Sigmoid colon (tissue), 7 donors: ENCODE measurements at regions of chr2 and their contacts with region 1.

Region 1: DNA sequence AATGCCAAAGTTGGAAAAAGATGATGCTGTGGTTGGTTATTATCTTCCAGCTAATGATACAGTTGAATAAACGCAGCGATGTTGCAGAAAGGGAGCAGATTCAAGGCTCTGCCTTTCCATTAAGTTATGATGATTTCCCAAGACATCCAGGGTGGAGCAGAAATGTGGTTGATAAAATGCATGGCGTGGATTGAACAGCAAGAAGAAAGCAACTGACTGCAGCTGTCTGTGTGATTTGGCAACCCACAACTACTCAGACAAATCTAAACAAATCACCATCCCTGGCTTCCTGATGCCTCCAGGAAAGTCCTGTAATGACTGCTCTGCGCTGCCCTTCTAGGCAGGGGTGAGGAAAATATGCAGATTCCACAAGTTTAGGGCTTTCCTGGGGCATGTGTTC is 166.3 kb downstream of the NRP2 start:
- DNase-seq: no peak
- H3K4me3 ChIP-seq: no peak overlapping the region
- H3K27ac ChIP-seq: no peak overlapping the region
- H3K4me1 ChIP-seq: peaks cover 0 to 19% (median 15%) of the 10 kb centered on the region in 4 donors
- H3K27me3 ChIP-seq: no peaks in the 10 kb centered on the region
- CTCF ChIP-seq: no peak
- EP300 ChIP-seq: no peak
- POLR2A ChIP-seq: no peak

Region 2: DNA sequence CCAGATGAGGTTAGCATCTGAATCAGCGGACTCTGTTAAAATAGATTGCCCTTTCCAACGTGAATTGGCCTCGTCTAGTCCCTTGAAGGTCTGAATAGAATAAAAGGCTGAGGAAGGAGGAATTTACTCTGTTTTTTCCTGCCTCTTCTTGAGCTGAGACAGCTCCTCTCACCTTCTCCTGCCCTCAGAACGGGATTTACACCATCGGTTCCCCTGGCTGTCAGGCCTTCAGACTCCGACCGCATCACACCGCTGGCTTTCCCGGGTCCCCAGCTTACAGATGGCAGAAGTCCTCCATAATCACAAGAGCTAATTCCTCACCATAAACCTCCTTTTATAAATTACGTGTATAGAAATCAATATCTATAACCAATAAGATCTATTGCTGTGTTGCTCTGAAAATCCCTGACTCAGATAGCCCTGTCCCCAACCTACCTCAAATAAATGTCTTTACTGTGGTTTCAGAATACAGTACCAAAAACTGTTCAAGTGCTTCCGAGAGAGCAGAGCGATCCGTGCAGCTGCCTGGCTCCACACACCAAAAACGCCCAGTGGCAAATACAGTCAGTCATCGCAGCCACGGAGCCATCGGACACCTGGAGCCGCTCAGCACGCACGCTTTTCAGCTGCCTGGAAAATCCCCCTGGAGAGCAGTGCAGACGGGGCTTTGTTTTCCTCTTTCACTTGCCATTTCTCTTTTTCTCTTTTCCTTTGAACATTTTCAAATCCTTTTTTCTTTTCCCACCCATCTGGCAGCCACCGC is 30.6 kb after region 1 on chr2:
- intact Hi-C with region 1: loop called (anchors 5 kb)
- DNase-seq: no peak
- H3K4me3 ChIP-seq: no peak overlapping the region
- H3K27ac ChIP-seq: peak overlapping the region in 2 of 4 donors; percentile 7 to 72
- H3K4me1 ChIP-seq: peaks cover 0 to 18% (median 11%) of the 10 kb centered on the region in 4 donors
- H3K27me3 ChIP-seq: no peaks in the 10 kb centered on the region
- CTCF ChIP-seq: no peak
- EP300 ChIP-seq: no peak
- POLR2A ChIP-seq: no peak

Region 3: GRCh38 chr2:205989271-205990071 is 140.9 kb after region 1 on chr2:
- intact Hi-C with region 1: no loop called
- DNase-seq: no peak
- H3K4me3 ChIP-seq: no peak overlapping the region
- H3K27ac ChIP-seq: no peak overlapping the region
- H3K4me1 ChIP-seq: no peaks in the 10 kb centered on the region
- H3K27me3 ChIP-seq: no peaks in the 10 kb centered on the region
- CTCF ChIP-seq: no peak
- EP300 ChIP-seq: no peak
- POLR2A ChIP-seq: no peak